ENCODE measurements at regions of chr14 and their contacts with region 1.

Region 1: GRCh38 chr14:35786856-35787255 is 22.2 kb downstream of the RALGAPA1 start:
- DNase-seq: peak; percentile 17
- H3K4me3 Mint-ChIP-seq: no peak overlapping the region
- H3K27ac Mint-ChIP-seq: no peak overlapping the region
- H3K4me1 Mint-ChIP-seq: peaks cover 38% of the 10 kb centered on the region
- H3K27me3 Mint-ChIP-seq: no peaks in the 10 kb centered on the region

Region 2: DNA sequence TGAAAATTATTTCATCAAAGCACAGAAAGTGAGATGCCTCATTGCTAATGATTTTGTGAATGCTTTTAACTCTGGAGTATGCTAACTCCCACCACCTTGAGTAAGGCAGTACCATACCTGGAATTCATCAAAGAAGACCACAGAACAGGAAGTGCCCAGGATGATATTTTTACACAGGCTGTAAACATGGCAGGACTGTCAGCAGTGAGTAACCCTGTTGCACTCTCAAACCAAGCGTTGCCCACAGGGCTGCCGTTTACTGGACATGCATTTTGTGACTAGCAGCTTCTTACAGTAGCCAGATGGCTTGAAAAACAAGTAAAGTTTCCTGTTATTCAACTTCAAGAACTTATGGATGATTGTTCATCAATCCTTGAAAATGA is 20.2 kb before region 1 on chr14:
- CTCF ChIA-PET with region 1: no interaction called
- intact Hi-C with region 1: loop called (anchors 1 kb)
- DNase-seq: peak; percentile 50
- H3K4me3 Mint-ChIP-seq: no peak overlapping the region
- H3K27ac Mint-ChIP-seq: no peak overlapping the region
- H3K4me1 Mint-ChIP-seq: peaks cover 13% of the 10 kb centered on the region
- H3K27me3 Mint-ChIP-seq: no peaks in the 10 kb centered on the region

Region 3: DNA sequence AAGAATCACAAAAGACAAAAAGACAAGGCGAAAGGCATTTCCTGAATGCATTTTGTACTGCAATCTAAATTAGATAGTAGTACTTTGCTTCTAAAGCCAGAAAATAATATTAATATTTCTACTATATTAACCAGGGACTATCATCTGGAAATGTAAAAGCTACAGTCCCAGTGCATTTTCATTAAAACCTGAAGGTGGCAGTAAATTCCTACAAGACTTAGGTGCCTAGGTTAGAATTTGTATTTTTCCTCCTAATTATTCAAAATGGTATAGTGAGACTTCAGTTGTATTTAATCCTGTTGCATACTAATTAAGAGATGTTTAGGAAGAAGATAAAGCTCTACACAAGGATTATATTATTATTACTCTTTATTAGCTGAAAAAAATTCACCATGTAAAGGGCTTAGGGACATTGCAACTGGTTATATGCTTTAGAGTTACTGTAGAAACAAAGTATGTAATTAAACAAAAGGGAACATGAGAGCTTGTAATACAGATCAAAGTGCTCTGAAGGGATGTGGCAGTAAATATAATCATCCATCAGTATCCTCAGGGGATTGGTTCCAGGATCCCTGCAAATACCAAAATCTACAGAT is 92.9 kb after region 1 on chr14:
- CTCF ChIA-PET with region 1: no interaction called
- intact Hi-C with region 1: no loop called
- DNase-seq: no peak
- H3K4me3 Mint-ChIP-seq: no peak overlapping the region
- H3K27ac Mint-ChIP-seq: no peak overlapping the region
- H3K4me1 Mint-ChIP-seq: no peaks in the 10 kb centered on the region
- H3K27me3 Mint-ChIP-seq: no peaks in the 10 kb centered on the region

Region 4: DNA sequence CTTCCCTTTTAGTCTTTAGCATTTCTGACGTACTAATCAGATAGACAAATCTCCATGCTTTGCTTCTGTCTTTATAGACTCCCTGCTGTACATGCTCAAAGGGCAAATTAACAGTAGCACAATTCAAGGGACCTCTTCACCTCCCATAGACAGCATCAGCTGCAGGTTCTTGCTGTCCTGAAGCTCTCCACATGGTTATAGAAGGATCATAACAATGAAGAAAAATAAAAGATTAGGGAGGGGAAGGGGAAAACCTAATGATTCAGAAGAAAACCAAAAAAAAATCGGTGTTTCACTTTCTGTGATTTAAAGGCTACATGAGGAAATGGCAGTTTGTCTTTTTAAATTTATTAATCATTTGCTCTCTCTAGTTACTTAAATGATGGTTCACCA is 234.2 kb after region 1 on chr14:
- CTCF ChIA-PET with region 1: no interaction called
- intact Hi-C with region 1: no loop called
- DNase-seq: no peak
- H3K4me3 Mint-ChIP-seq: no peak overlapping the region
- H3K27ac Mint-ChIP-seq: no peak overlapping the region
- H3K4me1 Mint-ChIP-seq: peaks cover 9% of the 10 kb centered on the region
- H3K27me3 Mint-ChIP-seq: no peaks in the 10 kb centered on the region